ENCODE measurements at regions of chr4 and their contacts with region 1.

Region 1: DNA sequence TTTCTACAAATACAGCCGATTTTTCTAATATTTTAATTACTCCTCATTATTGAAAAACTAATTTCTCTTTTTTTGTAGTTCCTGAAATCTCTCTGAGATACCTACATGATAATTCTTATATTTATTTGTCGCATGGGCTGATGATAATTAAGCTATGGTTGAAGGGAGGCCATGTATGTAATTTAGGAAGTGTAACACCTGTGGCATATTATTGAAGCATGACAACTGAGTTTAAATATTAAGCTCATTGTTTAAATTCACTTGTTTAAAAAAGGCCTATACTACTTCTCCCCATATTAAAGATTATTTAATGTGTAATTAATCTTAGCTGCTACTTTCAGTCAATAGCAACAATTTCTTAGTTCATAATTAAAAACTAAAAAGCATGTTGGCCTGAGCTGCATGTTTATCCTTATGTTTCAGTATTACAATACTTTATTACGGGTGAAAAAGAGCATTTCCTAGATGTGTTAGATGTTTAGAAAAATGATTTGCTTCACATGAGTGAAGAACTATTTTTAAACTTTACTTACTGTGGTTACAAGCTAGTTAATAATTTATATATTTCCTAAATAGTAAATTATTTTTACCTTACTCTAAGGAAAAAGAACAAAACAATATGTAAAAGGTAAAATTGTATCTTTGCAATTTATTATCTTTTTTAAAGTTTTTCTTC is 122.4 kb downstream of the RAP1GDS1 start:
- DNase-seq: no peak
- H3K4me3 ChIP-seq: no peak overlapping the region
- H3K4me3 Mint-ChIP-seq: no peak overlapping the region
- H3K27ac Mint-ChIP-seq: no peak overlapping the region
- H3K4me1 ChIP-seq: no peaks in the 10 kb centered on the region
- H3K4me1 Mint-ChIP-seq: peaks cover 7% of the 10 kb centered on the region
- H3K27me3 ChIP-seq: no peaks in the 10 kb centered on the region
- H3K27me3 Mint-ChIP-seq: no peaks in the 10 kb centered on the region
- CTCF ChIP-seq: no peak

Region 2: GRCh38 chr4:98150092-98150761 is 233.3 kb before region 1 on chr4:
- CTCF ChIA-PET with region 1: no interaction called
- POLR2A ChIA-PET with region 1: no interaction called
- intact Hi-C with region 1: loop called (anchors 2 kb)
- DNase-seq: no peak
- H3K4me3 ChIP-seq: no peak overlapping the region
- H3K4me3 Mint-ChIP-seq: no peak overlapping the region
- H3K27ac Mint-ChIP-seq: no peak overlapping the region
- H3K4me1 ChIP-seq: no peaks in the 10 kb centered on the region
- H3K4me1 Mint-ChIP-seq: no peaks in the 10 kb centered on the region
- H3K27me3 ChIP-seq: no peaks in the 10 kb centered on the region
- H3K27me3 Mint-ChIP-seq: no peaks in the 10 kb centered on the region
- CTCF ChIP-seq: no peak

Region 3: DNA sequence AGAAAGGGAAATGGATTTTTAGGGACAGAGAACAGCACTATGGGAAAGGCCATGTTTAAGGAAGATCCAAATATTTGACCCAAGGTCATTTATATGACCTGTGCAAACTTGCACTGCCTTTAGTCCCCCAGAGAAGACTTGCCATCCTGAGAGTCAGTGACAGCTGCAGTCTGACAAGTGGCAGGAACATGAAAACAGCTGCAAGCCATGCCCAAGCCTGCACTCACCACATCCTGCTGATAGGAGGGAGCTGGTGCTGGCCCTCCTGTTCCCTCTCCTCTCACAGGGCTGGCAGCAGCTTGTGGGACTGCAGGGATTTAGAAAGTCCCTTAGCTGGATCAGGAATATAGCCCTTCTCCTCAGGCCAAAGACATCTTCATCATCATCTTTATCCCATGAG is 65.3 kb after region 1 on chr4:
- CTCF ChIA-PET with region 1: no interaction called
- POLR2A ChIA-PET with region 1: no interaction called
- intact Hi-C with region 1: no loop called
- DNase-seq: no peak
- H3K4me3 ChIP-seq: no peak overlapping the region
- H3K4me3 Mint-ChIP-seq: no peak overlapping the region
- H3K27ac Mint-ChIP-seq: no peak overlapping the region
- H3K4me1 ChIP-seq: peaks cover 12% of the 10 kb centered on the region
- H3K4me1 Mint-ChIP-seq: no peaks in the 10 kb centered on the region
- H3K27me3 ChIP-seq: no peaks in the 10 kb centered on the region
- H3K27me3 Mint-ChIP-seq: no peaks in the 10 kb centered on the region
- CTCF ChIP-seq: no peak

Region 4: DNA sequence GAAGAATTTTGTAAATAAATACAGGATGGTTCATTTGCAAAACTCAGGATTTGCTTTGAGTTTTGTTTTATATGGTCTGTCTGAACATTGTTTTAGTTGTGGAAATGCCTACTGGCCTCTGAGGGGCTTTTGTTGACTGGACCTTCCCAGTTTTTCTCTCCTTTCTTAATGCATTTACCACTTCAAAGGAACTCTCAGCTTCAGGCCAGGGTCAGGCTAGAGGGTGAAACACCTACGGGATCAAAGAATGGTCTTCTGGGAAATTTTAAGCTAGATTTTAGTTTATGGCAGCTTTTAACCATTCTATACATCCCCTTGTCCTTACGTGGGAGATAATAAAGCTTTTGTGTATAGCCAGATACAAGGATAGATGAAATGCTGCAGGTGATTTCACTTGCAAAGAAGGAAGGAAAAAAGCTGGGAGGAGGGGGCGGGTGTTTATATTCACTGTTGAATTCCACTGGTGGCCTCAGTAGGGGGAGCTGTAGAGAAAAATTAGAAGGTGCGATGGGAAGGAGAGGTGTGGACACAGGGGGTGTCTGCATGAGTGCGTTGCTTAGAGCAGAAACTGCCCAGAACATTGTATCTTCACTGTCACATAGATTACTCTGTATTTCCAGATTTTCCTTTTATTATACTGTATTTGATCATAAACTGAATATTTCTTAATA is 123.0 kb after region 1 on chr4:
- CTCF ChIA-PET with region 1: no interaction called
- POLR2A ChIA-PET with region 1: no interaction called
- intact Hi-C with region 1: no loop called
- DNase-seq: peak in 1 of 2 experiments; percentile 18
- H3K4me3 ChIP-seq: no peak overlapping the region
- H3K4me3 Mint-ChIP-seq: no peak overlapping the region
- H3K27ac Mint-ChIP-seq: no peak overlapping the region
- H3K4me1 ChIP-seq: no peaks in the 10 kb centered on the region; the same call in 1 of the 2 replicates
- H3K4me1 Mint-ChIP-seq: no peaks in the 10 kb centered on the region
- H3K27me3 ChIP-seq: no peaks in the 10 kb centered on the region
- H3K27me3 Mint-ChIP-seq: no peaks in the 10 kb centered on the region
- CTCF ChIP-seq: peak; percentile 14 to 27

Region 5: DNA sequence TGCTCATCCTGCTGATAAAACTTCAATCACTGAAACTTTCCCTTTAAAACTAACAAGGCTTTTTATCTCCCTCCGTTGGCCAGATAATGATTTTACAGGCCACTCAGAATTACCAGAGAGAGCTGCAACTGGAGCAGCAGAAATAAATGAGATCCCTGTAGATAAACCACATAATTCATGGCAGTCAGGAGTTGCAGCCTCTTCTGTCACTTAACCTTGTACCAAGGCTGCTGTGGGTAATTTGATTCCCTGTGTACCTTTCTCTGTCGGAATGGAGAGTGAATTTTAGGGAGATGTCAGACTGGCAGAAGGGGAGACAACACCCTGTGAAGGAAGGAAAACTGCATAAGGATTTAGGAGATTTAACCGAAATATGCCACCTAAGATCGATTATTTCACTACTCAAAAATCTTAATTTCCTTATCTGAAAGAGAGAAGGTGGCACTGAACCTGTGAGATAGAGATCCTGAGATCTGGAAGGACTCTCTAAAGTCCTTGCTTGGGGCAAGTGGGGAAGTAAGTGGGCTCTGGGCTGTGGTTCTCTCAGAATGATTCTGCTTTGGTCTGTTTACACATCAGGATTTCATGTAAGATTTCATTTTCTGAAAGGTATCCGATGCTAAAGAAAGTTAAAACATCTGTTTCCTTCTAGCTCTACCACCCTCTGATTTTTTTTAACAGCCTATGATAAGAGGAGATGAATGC is 289.2 kb after region 1 on chr4:
- CTCF ChIA-PET with region 1: no interaction called
- POLR2A ChIA-PET with region 1: no interaction called
- intact Hi-C with region 1: no loop called
- DNase-seq: no peak
- H3K4me3 ChIP-seq: no peak overlapping the region
- H3K4me3 Mint-ChIP-seq: no peak overlapping the region
- H3K27ac Mint-ChIP-seq: no peak overlapping the region
- H3K4me1 ChIP-seq: peaks cover 25% of the 10 kb centered on the region
- H3K4me1 Mint-ChIP-seq: peaks cover 21% of the 10 kb centered on the region
- H3K27me3 ChIP-seq: no peaks in the 10 kb centered on the region
- H3K27me3 Mint-ChIP-seq: no peaks in the 10 kb centered on the region
- CTCF ChIP-seq: no peak

Measured in Caco-2 (cell line).